Heart left ventricle (tissue), 16 donors: ENCODE measurements at regions of chr2 and their contacts with region 1.

Region 1: GRCh38 chr2:85011747-85012146 is 40.8 kb downstream of the KCMF1 start:
- DNase-seq: no peak
- ATAC-seq: no peak
- H3K4me3 ChIP-seq: no peak overlapping the region
- H3K27ac ChIP-seq: no peak overlapping the region
- H3K4me1 ChIP-seq: peaks cover 7 to 90% (median 52%) of the 10 kb centered on the region in 12 donors
- H3K27me3 ChIP-seq: no peaks in the 10 kb centered on the region
- CTCF ChIP-seq: peak in 2 of 12 donors; percentile 7 to 15
- POLR2A ChIP-seq: no peak

Region 2: DNA sequence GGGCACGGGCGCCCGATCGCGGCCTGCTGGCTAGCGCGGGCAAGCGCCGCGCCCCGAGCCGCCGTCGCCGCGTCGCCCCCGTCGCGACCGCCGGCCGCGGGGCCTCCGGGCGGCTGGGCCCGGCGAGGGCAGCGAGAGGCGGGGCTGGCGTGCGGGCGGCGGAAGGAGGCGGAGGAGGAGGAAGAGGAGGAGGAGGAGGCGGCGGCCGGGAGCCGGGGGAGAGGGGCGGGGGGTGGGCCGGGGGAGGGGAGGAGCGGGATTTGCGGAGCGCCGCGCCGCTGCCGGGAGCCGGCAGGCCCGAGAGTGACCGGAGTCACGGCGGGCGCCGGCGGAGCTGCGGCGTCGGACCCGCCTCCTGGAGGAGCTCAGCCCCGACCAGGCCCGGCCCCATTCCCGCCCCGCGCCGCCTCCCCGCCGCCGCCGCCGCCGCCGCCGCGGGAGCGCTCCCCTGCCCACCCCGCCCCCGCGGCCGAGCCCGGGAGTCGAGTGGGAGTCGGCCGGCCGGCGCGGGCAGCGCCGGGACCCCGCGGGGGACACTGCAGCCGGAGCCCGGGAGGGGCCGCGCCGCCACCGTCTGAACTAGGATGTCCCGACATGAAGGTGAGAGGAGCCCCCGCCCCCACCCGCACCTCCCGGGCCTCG is 40.8 kb before region 1 on chr2 and contains the start of gene KCMF1:
- intact Hi-C with region 1: loop called in 4 of 10 experiments (anchors 5 kb)
- DNase-seq: peak; percentile 83 to 93 (median 87)
- ATAC-seq: peak; percentile 59 to 80 (median 78)
- H3K4me3 ChIP-seq: peak within 1 kb of the TSS; percentile 74 to 98 (median 90)
- H3K27ac ChIP-seq: peak within 1 kb of the TSS; percentile 92 to 98 (median 96)
- H3K4me1 ChIP-seq: peaks cover 6 to 69% (median 39%) of the 10 kb centered on the region in 12 donors
- H3K27me3 ChIP-seq: no peaks in the 10 kb centered on the region
- CTCF ChIP-seq: no peak
- POLR2A ChIP-seq: no peak
- total RNA-seq, gene KCMF1: 58.9 to 104 (median 85.2) TPM

Region 3: DNA sequence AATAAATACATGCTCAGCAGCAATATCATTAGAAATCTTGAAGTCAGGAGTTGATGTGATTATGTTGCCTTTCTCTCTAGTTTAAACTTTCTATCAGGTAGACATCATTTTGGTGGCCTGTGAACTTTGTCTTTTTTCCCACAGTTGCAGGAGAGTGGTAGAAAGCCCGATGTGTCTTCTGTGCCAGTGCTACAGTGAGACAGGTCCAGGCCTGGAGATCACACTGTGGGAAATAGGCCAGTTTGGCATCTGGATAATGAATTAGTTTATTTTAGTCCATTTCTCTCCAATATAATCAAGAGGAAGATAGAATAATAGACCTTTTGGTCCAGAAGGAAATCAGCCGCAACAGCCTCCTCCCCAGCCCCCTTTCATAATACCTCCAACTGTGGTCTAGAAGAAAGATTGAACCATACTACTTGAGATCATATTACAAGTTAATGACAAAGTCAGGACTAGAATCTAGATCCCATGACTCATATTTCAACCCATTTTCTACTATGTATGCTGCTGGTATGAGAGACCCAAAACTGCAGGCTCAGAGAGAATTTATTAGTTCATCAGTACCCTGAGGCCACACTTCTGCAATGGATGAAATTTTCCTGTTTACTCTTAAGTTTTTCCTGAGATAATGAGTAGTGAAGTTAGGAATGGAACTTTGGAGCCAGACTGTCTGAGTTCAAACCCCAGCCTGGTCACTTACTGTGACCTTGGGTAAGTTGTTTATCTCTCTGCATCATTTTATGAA is 20.2 kb before region 1 on chr2:
- intact Hi-C with region 1: no loop called
- DNase-seq: no peak
- ATAC-seq: peak in 2 of 4 donors; percentile 21 to 61
- H3K4me3 ChIP-seq: no peak overlapping the region
- H3K27ac ChIP-seq: peak overlapping the region in 4 of 12 donors; percentile 12 to 39 (median 18)
- H3K4me1 ChIP-seq: peaks cover 0 to 94% (median 50%) of the 10 kb centered on the region in 12 donors
- H3K27me3 ChIP-seq: no peaks in the 10 kb centered on the region
- CTCF ChIP-seq: no peak
- POLR2A ChIP-seq: no peak